ENCODE measurements at regions of chr1 and their contacts with region 1.

Region 1: DNA sequence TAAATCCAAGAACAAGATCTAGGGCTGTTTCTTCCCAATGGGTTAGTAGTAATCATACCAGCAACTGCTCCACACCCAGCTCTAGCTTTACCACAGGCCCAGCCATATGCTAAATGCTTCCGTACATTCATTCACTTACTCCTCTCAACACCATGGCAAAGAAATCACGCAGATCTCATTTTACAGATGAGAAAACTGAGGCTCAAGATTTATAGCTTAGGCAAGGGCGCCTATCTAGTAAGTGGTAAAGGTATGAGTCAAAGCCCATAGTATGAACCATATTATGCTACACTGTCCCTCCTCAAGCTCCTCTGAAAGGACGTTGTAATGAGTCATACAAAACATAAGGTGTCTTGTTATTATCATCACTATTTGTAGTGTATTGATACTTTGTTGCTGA is 82.2 kb downstream of the NIBAN1 start:
- DNase-seq: no peak
- H3K4me3 Mint-ChIP-seq: no peak overlapping the region
- H3K27ac Mint-ChIP-seq: peak overlapping the region; percentile 85
- H3K4me1 Mint-ChIP-seq: peaks cover 41% of the 10 kb centered on the region
- H3K27me3 Mint-ChIP-seq: no peaks in the 10 kb centered on the region

Region 2: GRCh38 chr1:184866991-184867788 is 24.9 kb before region 1 on chr1:
- intact Hi-C with region 1: loop called (anchors 1 kb)
- DNase-seq: peak; percentile 53
- H3K4me3 Mint-ChIP-seq: peak overlapping the region; percentile 60
- H3K27ac Mint-ChIP-seq: peak overlapping the region; percentile 93
- H3K4me1 Mint-ChIP-seq: peaks cover 40% of the 10 kb centered on the region
- H3K27me3 Mint-ChIP-seq: peaks cover 4% of the 10 kb centered on the region

Region 3: DNA sequence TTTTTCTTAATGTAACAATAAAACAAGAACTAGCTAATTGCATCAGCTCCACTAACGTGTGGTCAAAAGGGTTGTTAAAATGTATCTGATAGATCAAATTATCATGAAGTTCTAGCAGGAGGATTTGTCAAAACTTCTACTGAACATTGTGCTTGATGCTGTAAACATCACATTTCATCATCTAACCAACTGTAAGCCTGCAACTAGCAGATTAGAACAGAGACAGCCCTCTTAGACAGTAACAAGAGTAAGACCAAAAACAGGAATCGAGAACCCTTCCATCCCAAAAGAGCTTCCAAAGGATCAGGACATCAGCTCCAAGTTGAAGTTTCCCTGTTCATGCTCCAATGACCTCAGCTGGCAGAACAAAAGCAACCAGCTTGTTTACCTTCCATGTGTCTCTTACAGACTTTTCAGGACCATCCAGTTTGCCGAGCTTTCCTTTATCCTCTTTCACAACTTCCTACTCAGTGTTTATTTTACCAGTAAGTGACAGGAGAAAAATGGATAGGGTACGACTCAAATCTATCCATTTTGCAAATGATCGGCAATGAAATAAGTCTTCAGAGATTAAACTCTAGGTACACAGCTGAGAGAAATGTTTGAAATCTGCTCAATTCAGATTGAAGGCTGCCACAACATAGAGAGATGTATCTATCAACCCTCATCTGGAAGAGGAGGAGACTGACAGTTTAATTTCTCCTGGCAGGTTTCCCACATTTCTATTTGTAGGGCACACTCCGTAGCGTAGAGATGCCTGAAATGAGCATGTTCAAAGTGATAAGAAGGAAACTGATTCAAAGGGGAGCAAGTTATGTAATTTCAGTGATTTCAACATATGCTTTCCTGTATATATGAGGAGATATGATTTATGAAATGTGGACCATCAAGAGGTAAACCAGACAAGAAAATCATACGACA is 37.9 kb after region 1 on chr1:
- intact Hi-C with region 1: loop called (anchors 5 kb)
- DNase-seq: no peak
- H3K4me3 Mint-ChIP-seq: no peak overlapping the region
- H3K27ac Mint-ChIP-seq: no peak overlapping the region
- H3K4me1 Mint-ChIP-seq: peaks cover 9% of the 10 kb centered on the region
- H3K27me3 Mint-ChIP-seq: peaks cover 2% of the 10 kb centered on the region

Region 4: GRCh38 chr1:184954231-184954995 is 62.3 kb after region 1 on chr1:
- intact Hi-C with region 1: loop called (anchors 1 kb)
- DNase-seq: no peak
- H3K4me3 Mint-ChIP-seq: peak overlapping the region; percentile 27
- H3K27ac Mint-ChIP-seq: peak overlapping the region; percentile 67
- H3K4me1 Mint-ChIP-seq: peaks cover 17% of the 10 kb centered on the region
- H3K27me3 Mint-ChIP-seq: no peaks in the 10 kb centered on the region

Region 5: GRCh38 chr1:185044981-185045813 is 153.1 kb after region 1 on chr1 and contains the start of gene RNF2:
- intact Hi-C with region 1: loop called (anchors 10 kb)
- DNase-seq: peak; percentile 67
- H3K4me3 Mint-ChIP-seq: peak within 1 kb of the TSS; percentile 87
- H3K27ac Mint-ChIP-seq: peak within 1 kb of the TSS; percentile 80
- H3K4me1 Mint-ChIP-seq: peaks cover 21% of the 10 kb centered on the region
- H3K27me3 Mint-ChIP-seq: peaks cover 13% of the 10 kb centered on the region
- total RNA-seq, gene RNF2: 25.7 and 30.6 TPM in 2 replicates

Region 6: DNA sequence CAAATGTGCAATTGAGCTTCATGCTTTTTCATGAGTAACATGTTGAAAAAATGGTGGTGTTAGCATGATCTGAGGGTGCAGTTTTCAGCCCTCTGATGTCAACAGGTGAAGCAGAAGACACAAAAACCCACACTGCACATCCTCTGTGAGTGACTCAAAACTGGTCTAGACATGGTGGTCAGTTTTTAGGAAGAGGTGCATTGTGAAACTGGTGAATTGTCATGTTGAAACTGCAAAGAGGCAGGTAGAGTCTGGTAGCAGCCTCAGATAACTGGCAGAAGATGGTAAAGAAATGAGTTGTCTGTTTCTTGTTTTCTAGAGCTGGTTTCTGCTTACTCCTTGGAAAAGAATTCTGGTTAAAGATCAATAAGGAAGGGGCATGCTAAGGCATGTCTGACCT is 744.7 kb after region 1 on chr1:
- intact Hi-C with region 1: loop called (anchors 5 kb)
- DNase-seq: peak; percentile 56
- H3K4me3 Mint-ChIP-seq: no peak overlapping the region
- H3K27ac Mint-ChIP-seq: peak overlapping the region; percentile 79
- H3K4me1 Mint-ChIP-seq: peaks cover 22% of the 10 kb centered on the region
- H3K27me3 Mint-ChIP-seq: no peaks in the 10 kb centered on the region

Measured in activated T-helper 2 cell treated with anti-CD3 and anti-CD28 coated beads, Interferon-gamma antibody, Interleukin-2, Interleukin-4, amounts not matched to agents 10 μg/mL and 5 μg/mL and 100 μg/mL, durations not matched to agents 14 hours and 24 hours and 36 hours (primary cell).